Aorta (tissue), 5 donors: ENCODE measurements at regions of chr1 and their contacts with region 1.

Region 1: GRCh38 chr1:37486680-37487618 is 12.6 kb downstream of the ZC3H12A start:
- DNase-seq: peak; percentile 84 to 96
- ATAC-seq: peak; percentile 90
- H3K4me3 ChIP-seq: no peak overlapping the region
- H3K27ac ChIP-seq: peak overlapping the region in 1 of 2 donors; percentile 9
- H3K4me1 ChIP-seq: peaks cover 0 to 4% of the 10 kb centered on the region in 2 donors
- H3K27me3 ChIP-seq: no peaks in the 10 kb centered on the region

Region 2: DNA sequence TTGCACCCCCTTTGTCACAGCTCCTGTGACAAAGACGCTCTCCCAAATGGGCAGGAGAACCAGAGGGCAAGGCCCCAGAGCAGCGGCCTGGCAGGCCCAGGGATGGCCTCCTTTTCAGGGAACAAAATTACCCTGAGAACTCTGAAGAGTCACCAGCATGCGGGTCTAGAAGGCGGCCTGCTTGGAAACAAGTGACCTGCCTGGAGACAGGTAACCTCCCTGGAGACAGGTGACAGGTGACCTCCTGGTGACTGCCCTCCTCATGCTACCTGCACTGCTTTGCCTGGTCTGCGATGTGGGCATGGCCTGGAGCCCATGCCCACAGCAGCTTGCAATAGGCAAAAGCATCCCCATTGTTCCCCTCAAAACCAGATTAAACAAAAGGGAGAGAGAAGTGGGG is 99.1 kb before region 1 on chr1:
- intact Hi-C with region 1: no loop called
- DNase-seq: no peak
- ATAC-seq: no peak
- H3K4me3 ChIP-seq: no peak overlapping the region
- H3K27ac ChIP-seq: no peak overlapping the region
- H3K4me1 ChIP-seq: no peaks in the 10 kb centered on the region
- H3K27me3 ChIP-seq: peaks cover 0 to 1% of the 10 kb centered on the region in 2 donors

Region 3: GRCh38 chr1:37449936-37450335 is 37.0 kb before region 1 on chr1:
- intact Hi-C with region 1: loop called (anchors 1 kb)
- DNase-seq: peak in 1 of 2 donors; percentile 66
- ATAC-seq: no peak
- H3K4me3 ChIP-seq: no peak overlapping the region
- H3K27ac ChIP-seq: no peak overlapping the region
- H3K4me1 ChIP-seq: no peaks in the 10 kb centered on the region
- H3K27me3 ChIP-seq: no peaks in the 10 kb centered on the region

Region 4: GRCh38 chr1:37458528-37458927 is 28.4 kb before region 1 on chr1:
- intact Hi-C with region 1: loop called (anchors 1 kb)
- DNase-seq: no peak
- ATAC-seq: no peak
- H3K4me3 ChIP-seq: no peak overlapping the region
- H3K27ac ChIP-seq: no peak overlapping the region
- H3K4me1 ChIP-seq: no peaks in the 10 kb centered on the region
- H3K27me3 ChIP-seq: no peaks in the 10 kb centered on the region